HCT116 (cell line): ENCODE measurements at regions of chr3 and their contacts with region 1.

Region 1: GRCh38 chr3:66038726-66039589 is at the start of gene MAGI1:
- DNase-seq: peak; percentile 88
- ATAC-seq: peak; percentile 85
- H3K4me3 ChIP-seq: peak within 1 kb of the TSS; percentile 81 to 91
- H3K27ac ChIP-seq: peak within 1 kb of the TSS; percentile 88
- H3K4me1 ChIP-seq: peaks cover 20 to 25% of the 10 kb centered on the region in 2 experiments
- H3K27me3 ChIP-seq: no peaks in the 10 kb centered on the region
- CTCF ChIP-seq: no peak
- POLR2A ChIP-seq: no peak
- RAD21 ChIP-seq: peak; percentile 40
- total RNA-seq, gene MAGI1: 38.6 TPM

Region 2: GRCh38 chr3:65785065-65785645 is 253.8 kb before region 1 on chr3:
- CTCF ChIA-PET with region 1: no interaction called
- POLR2A ChIA-PET with region 1: no interaction called
- RAD21 ChIA-PET with region 1: no interaction called
- intact Hi-C with region 1: loop called (anchors 5 kb)
- DNase-seq: peak; percentile 32
- ATAC-seq: peak; percentile 70
- H3K4me3 ChIP-seq: no peak overlapping the region
- H3K27ac ChIP-seq: no peak overlapping the region
- H3K4me1 ChIP-seq: peaks cover 0 to 3% of the 10 kb centered on the region in 2 experiments; a peak in 1 of 4 replicates
- H3K27me3 ChIP-seq: no peaks in the 10 kb centered on the region
- CTCF ChIP-seq: peak; percentile 60 to 89 (median 66); a peak in 5 of 6 replicates
- POLR2A ChIP-seq: no peak
- RAD21 ChIP-seq: peak; percentile 90

Region 3: DNA sequence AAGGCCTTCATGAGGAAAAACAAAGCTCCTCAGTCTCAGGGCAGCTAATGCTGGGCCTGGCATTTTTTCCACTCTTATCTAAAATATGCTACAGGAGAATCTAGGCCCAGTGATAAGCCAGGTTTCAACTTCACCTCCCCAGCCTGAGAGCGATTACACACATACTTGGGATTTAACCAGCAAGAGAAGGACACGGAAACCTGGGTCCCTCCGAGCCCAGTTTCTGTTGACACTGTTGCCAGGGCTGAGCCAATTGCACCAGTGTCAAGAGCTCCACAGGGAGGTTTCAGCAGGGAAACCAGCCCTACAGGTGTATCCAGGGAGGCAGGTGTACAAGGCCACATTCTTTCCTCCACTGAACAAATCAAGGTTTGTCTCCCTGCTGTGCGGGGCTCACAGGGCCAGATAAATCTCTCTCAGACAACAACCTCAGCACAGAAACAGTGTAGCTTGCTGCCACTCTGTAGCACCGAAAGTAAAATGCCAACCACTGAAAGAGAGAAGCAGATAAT is 85.6 kb before region 1 on chr3:
- CTCF ChIA-PET with region 1: no interaction called
- POLR2A ChIA-PET with region 1: no interaction called
- RAD21 ChIA-PET with region 1: no interaction called
- intact Hi-C with region 1: loop called (anchors 2 kb)
- DNase-seq: peak; percentile 79
- ATAC-seq: peak; percentile 65
- H3K4me3 ChIP-seq: peak overlapping the region in 1 of 2 experiments; percentile 25; a peak in 1 of 4 replicates
- H3K27ac ChIP-seq: peak overlapping the region; percentile 82
- H3K4me1 ChIP-seq: peaks cover 94 to 97% of the 10 kb centered on the region in 2 experiments
- H3K27me3 ChIP-seq: no peaks in the 10 kb centered on the region
- CTCF ChIP-seq: no peak
- POLR2A ChIP-seq: no peak
- RAD21 ChIP-seq: peak; percentile 16

Region 4: DNA sequence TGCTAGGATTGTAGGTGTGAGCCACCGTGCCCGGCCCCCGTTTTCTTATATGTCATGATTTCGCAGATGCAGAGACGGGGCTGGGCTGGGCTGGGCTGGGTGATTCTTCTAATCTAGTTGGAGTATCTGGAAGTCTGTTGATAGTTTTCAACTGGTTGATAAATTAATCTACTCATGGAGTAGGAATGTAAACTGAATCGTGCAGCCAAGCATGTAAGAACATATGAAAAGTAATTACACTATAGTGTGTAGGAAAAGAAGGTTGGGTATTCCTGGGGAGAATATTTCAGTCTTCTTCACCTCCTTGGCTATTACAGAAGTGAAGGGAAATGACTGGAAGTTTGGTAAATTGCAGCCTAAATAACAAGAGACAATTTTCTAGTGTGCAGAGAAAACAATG is 82.4 kb after region 1 on chr3:
- CTCF ChIA-PET with region 1: no interaction called
- POLR2A ChIA-PET with region 1: no interaction called
- RAD21 ChIA-PET with region 1: no interaction called
- intact Hi-C with region 1: no loop called
- DNase-seq: no peak
- ATAC-seq: no peak
- H3K4me3 ChIP-seq: no peak overlapping the region
- H3K27ac ChIP-seq: no peak overlapping the region
- H3K4me1 ChIP-seq: peaks cover 3 to 4% of the 10 kb centered on the region in 2 experiments; a peak in 3 of 4 replicates
- H3K27me3 ChIP-seq: no peaks in the 10 kb centered on the region
- CTCF ChIP-seq: no peak
- POLR2A ChIP-seq: no peak
- RAD21 ChIP-seq: no peak